ENCODE measurements at regions of chr7 and their contacts with region 1.

Region 1: GRCh38 chr7:149104749-149105148 is 14.2 kb upstream of the ZNF786 start:
- DNase-seq: no peak
- ATAC-seq: peak; percentile 13 to 37; a peak in 3 of 6 replicates
- H3K4me3 ChIP-seq: no peak overlapping the region
- H3K27ac ChIP-seq: no peak overlapping the region
- H3K4me1 ChIP-seq: no peaks in the 10 kb centered on the region
- CTCF ChIP-seq: no peak
- EP300 ChIP-seq: no peak
- POLR2A ChIP-seq: no peak
- RAD21 ChIP-seq: no peak

Region 2: GRCh38 chr7:148987010-148987750 is 117.6 kb before region 1 on chr7:
- CTCF ChIA-PET with region 1: no interaction called
- POLR2A ChIA-PET with region 1: interaction called, 10 read pairs
- DNase-seq: peak; percentile 89 to 94
- ATAC-seq: peak; percentile 72 to 86
- H3K4me3 ChIP-seq: peak overlapping the region; percentile 59
- H3K27ac ChIP-seq: peak overlapping the region; percentile 61 to 76
- H3K4me1 ChIP-seq: peaks cover 16% of the 10 kb centered on the region
- CTCF ChIP-seq: no peak
- EP300 ChIP-seq: no peak
- POLR2A ChIP-seq: peak; percentile 46; the same call in 1 of the 2 replicates
- RAD21 ChIP-seq: no peak

Region 3: GRCh38 chr7:149011491-149011890 is 93.3 kb before region 1 on chr7:
- CTCF ChIA-PET with region 1: no interaction called
- POLR2A ChIA-PET with region 1: no interaction called
- DNase-seq: no peak
- ATAC-seq: no peak
- H3K4me3 ChIP-seq: no peak overlapping the region
- H3K27ac ChIP-seq: no peak overlapping the region
- H3K4me1 ChIP-seq: no peaks in the 10 kb centered on the region
- CTCF ChIP-seq: no peak
- EP300 ChIP-seq: no peak
- POLR2A ChIP-seq: no peak
- RAD21 ChIP-seq: no peak